CD4-positive, alpha-beta T cell (primary cell): ENCODE measurements at regions of chr11 and their contacts with region 1.

Region 1: DNA sequence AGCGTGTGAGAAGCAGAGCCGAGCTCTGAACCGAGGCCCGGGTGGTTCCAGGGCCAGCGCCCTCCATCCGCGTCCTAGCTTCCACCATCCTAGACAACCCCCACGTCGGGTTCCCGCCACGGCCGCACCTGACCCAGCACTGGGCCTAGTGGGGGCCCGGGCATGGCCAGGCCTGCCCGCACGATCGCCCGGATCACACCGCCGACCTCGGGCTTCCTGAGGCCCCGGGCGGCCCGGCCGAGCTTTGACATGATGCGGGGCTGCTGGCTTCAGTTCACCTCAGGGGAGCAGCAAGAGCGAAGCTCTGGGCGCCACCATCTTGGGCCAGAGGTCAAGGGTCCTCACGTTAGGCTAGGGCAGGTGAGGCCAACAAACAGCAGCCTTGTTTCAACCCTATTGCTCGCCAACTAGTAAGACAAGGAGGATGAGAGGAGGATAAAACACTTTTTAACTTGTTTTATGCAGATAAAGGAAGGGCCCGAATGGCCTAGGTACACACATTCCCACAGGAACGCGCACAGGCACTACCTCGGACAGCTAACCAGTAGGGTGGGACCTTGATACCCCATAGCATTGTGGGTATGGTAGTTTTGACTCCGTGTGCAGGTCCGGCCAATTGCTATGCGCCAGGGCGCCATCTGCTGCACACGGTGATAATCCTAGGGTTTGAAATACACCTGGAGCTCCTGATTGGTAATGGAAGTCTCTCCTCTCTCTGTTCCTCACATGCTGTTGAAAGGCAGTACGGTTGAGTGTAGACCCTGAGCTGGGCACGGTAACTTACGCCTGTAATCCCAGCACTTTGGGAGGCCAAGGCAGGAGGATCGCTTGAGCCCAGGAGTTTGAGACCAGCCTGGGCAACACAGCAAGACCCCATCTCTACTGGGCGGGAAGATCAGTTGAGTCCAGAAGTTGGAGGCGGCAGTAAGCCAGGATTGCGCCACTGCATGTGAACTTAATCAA is at the start of gene MRPL11:
- DNase-seq: peak; percentile 78 to 95 (median 86)
- ATAC-seq: peak; percentile 99
- H3K4me3 ChIP-seq: peak within 1 kb of the TSS; percentile 70
- H3K4me3 Mint-ChIP-seq: peak within 1 kb of the TSS; percentile 94
- H3K27ac ChIP-seq: peak within 1 kb of the TSS; percentile 67 to 89
- H3K27ac Mint-ChIP-seq: peak within 1 kb of the TSS; percentile 87
- H3K4me1 ChIP-seq: peaks cover 11% of the 10 kb centered on the region
- H3K4me1 Mint-ChIP-seq: peaks cover 13% of the 10 kb centered on the region
- H3K27me3 ChIP-seq: no peaks in the 10 kb centered on the region
- H3K27me3 Mint-ChIP-seq: peaks cover 3% of the 10 kb centered on the region
- CTCF ChIP-seq: peak; percentile 69
- total RNA-seq, gene MRPL11: 17.7 to 21.0 TPM

Region 2: DNA sequence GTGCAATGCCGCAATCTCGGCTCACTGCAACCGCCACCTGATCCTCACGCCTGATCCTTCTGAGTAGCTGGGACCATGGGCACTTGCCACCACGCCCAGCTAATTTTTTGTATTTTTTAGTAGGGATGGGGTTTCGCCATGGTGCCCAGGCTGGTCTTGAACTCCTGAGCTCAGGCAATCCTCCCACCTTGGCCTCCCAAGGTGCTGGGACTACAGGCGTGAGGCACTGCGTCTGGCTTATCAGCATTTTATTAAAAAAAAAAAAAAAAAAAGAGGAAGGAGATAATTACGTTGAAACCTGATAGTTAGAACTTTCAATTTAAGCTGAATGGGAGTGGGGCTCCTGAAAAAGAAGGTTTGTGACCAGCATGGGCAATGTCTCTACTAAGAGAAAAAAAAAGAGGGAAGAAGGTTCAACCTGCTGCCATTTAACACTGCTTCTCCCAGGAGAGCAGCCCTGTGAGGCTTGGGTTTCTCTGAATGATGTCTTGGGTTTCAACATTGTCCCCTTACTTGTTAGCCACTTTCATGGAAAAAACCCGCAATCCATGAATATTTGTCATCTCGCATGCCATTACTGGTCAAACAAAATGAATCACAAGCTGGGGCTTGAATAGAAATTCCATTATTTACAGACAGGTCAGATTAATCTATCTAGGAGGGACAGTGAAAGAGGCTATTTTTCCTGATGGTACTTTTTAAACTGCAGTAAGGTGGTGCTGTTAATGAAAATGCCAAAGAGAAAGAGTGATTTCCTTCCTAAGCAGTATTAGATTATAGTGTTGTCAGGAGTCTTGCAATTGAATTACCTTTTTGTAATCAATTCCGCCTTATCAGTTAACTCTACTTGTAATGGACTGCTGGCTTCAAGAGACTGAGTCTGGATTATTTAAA is 296.2 kb before region 1 on chr11:
- CTCF ChIA-PET with region 1: no interaction called
- POLR2A ChIA-PET with region 1: no interaction called
- intact Hi-C with region 1: no loop called
- DNase-seq: no peak
- ATAC-seq: no peak
- H3K4me3 ChIP-seq: no peak overlapping the region
- H3K4me3 Mint-ChIP-seq: no peak overlapping the region
- H3K27ac ChIP-seq: no peak overlapping the region
- H3K27ac Mint-ChIP-seq: no peak overlapping the region
- H3K4me1 ChIP-seq: peaks cover 16% of the 10 kb centered on the region
- H3K4me1 Mint-ChIP-seq: peaks cover 60% of the 10 kb centered on the region
- H3K27me3 ChIP-seq: no peaks in the 10 kb centered on the region
- H3K27me3 Mint-ChIP-seq: no peaks in the 10 kb centered on the region
- CTCF ChIP-seq: no peak

Region 3: GRCh38 chr11:66371627-66372415 is 67.0 kb before region 1 on chr11 and contains the start of gene SLC29A2:
- CTCF ChIA-PET with region 1: no interaction called
- POLR2A ChIA-PET with region 1: interaction called, 15 read pairs
- intact Hi-C with region 1: no loop called
- DNase-seq: peak; percentile 50 to 89 (median 75)
- ATAC-seq: peak; percentile 73
- H3K4me3 ChIP-seq: peak within 1 kb of the TSS; percentile 79
- H3K4me3 Mint-ChIP-seq: peak within 1 kb of the TSS; percentile 97
- H3K27ac ChIP-seq: peak within 1 kb of the TSS; percentile 60 to 74
- H3K27ac Mint-ChIP-seq: peak within 1 kb of the TSS; percentile 92
- H3K4me1 ChIP-seq: peaks cover 16% of the 10 kb centered on the region
- H3K4me1 Mint-ChIP-seq: peaks cover 9% of the 10 kb centered on the region
- H3K27me3 ChIP-seq: no peaks in the 10 kb centered on the region
- H3K27me3 Mint-ChIP-seq: no peaks in the 10 kb centered on the region
- CTCF ChIP-seq: no peak
- total RNA-seq, gene SLC29A2: 9.7 TPM

Region 4: GRCh38 chr11:66421492-66422205 is 17.1 kb before region 1 on chr11:
- CTCF ChIA-PET with region 1: interaction called, 27 read pairs
- POLR2A ChIA-PET with region 1: interaction called, 14 read pairs
- intact Hi-C with region 1: no loop called
- DNase-seq: peak; percentile 78 to 95 (median 86)
- ATAC-seq: peak; percentile 97
- H3K4me3 ChIP-seq: no peak overlapping the region
- H3K4me3 Mint-ChIP-seq: no peak overlapping the region
- H3K27ac ChIP-seq: no peak overlapping the region
- H3K27ac Mint-ChIP-seq: peak overlapping the region; percentile 45
- H3K4me1 ChIP-seq: peaks cover 11% of the 10 kb centered on the region
- H3K4me1 Mint-ChIP-seq: peaks cover 6% of the 10 kb centered on the region
- H3K27me3 ChIP-seq: peaks cover 26 to 37% of the 10 kb centered on the region in 2 experiments
- H3K27me3 Mint-ChIP-seq: peaks cover 40% of the 10 kb centered on the region
- CTCF ChIP-seq: no peak

Region 5: GRCh38 chr11:66480117-66480938 is 41.5 kb after region 1 on chr11 and contains the start of gene DPP3:
- CTCF ChIA-PET with region 1: interaction called, 13 read pairs
- POLR2A ChIA-PET with region 1: interaction called, 30 read pairs
- intact Hi-C with region 1: loop called in 1 of 2 experiments (anchors 2 kb)
- DNase-seq: peak; percentile 91 to 97 (median 95)
- ATAC-seq: peak; percentile 98
- H3K4me3 ChIP-seq: peak within 1 kb of the TSS; percentile 79
- H3K4me3 Mint-ChIP-seq: peak within 1 kb of the TSS; percentile 91
- H3K27ac ChIP-seq: peak within 1 kb of the TSS; percentile 70 to 79
- H3K27ac Mint-ChIP-seq: peak within 1 kb of the TSS; percentile 83
- H3K4me1 ChIP-seq: peaks cover 29% of the 10 kb centered on the region
- H3K4me1 Mint-ChIP-seq: peaks cover 24% of the 10 kb centered on the region
- H3K27me3 ChIP-seq: no peaks in the 10 kb centered on the region
- H3K27me3 Mint-ChIP-seq: no peaks in the 10 kb centered on the region
- CTCF ChIP-seq: no peak
- total RNA-seq, gene DPP3: 16.9 to 17.7 TPM

Region 6: DNA sequence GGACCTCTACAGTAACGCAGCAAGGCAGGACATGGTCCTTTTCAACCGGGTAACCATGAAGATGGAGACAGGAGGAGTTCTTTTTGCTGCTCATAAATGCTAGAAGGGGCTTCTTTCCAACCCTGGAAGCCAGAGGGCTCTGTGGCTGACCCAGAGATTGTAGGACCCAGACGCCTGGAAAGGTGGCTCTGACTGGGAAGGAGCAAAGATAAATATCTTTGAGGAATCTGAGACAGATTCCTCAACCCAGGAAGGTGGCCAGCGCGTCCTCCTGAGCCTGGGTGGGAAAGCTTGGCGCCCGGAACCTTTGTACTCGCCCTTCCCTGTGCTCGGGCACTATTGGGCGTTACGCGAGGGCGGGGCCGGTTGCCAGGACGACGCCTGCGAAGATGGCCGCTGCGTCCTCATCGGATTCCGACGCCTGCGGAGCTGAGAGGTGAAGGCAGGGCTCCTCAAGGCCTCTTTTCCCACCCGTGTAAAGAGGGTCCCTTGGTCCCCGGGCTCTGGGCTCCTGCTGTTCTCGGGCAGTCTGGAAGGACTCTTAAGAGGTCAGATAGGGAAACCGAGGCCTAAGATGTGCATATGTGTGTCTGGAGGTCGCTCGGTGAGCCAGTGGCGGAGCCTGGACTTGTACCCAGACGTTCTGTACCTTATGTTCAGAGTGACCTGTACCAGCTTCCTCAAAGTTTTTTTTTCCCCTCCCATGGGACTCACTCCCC is 71.6 kb after region 1 on chr11 and contains the start of gene BBS1:
- CTCF ChIA-PET with region 1: interaction called, 10 read pairs
- POLR2A ChIA-PET with region 1: interaction called, 3 read pairs
- intact Hi-C with region 1: loop called in 1 of 2 experiments (anchors 2 kb)
- DNase-seq: peak; percentile 73 to 90 (median 80)
- ATAC-seq: peak; percentile 99
- H3K4me3 ChIP-seq: peak within 1 kb of the TSS; percentile 77
- H3K4me3 Mint-ChIP-seq: peak within 1 kb of the TSS; percentile 90
- H3K27ac ChIP-seq: no peak within 1 kb of the TSS
- H3K27ac Mint-ChIP-seq: peak within 1 kb of the TSS; percentile 61
- H3K4me1 ChIP-seq: peaks cover 14% of the 10 kb centered on the region
- H3K4me1 Mint-ChIP-seq: peaks cover 16% of the 10 kb centered on the region
- H3K27me3 ChIP-seq: no peaks in the 10 kb centered on the region
- H3K27me3 Mint-ChIP-seq: no peaks in the 10 kb centered on the region
- CTCF ChIP-seq: no peak
- total RNA-seq, gene BBS1: 11.7 to 11.9 TPM